GM12878 (cell line): ENCODE measurements at regions of chr16 and their contacts with region 1.

Region 1: GRCh38 chr16:71461686-71462648 is at the start of gene ZNF23:
- DNase-seq: peak; percentile 39
- ATAC-seq: peak; percentile 98
- H3K4me3 ChIP-seq: peak within 1 kb of the TSS; percentile 90
- H3K27ac ChIP-seq: peak within 1 kb of the TSS; percentile 74
- H3K4me1 ChIP-seq: no peaks in the 10 kb centered on the region
- H3K27me3 ChIP-seq: no peaks in the 10 kb centered on the region
- CTCF ChIP-seq: peak; percentile 9 to 23 (median 22); a peak in 3 of 6 replicates
- EP300 ChIP-seq: no peak
- POLR2A ChIP-seq: peak; percentile 99
- RAD21 ChIP-seq: no peak
- polyA plus RNA-seq, gene ZNF23: 3.6 to 4.8 TPM

Region 2: GRCh38 chr16:71484006-71484893 is 22.3 kb after region 1 on chr16:
- CTCF ChIA-PET with region 1: interaction called, 5 read pairs
- POLR2A ChIA-PET with region 1: interaction called, 10 read pairs
- RAD21 ChIA-PET with region 1: interaction called, 4 read pairs
- SMC1A ChIA-PET with region 1: interaction called, 21 read pairs
- in situ Hi-C with region 1: no loop called
- intact Hi-C with region 1: loop called (anchors 1 kb)
- DNase-seq: peak; percentile 82
- ATAC-seq: peak; percentile 94
- H3K4me3 ChIP-seq: peak overlapping the region; percentile 65
- H3K27ac ChIP-seq: peak overlapping the region; percentile 96
- H3K4me1 ChIP-seq: peaks cover 3% of the 10 kb centered on the region; the same call in 1 of the 2 replicates
- H3K27me3 ChIP-seq: no peaks in the 10 kb centered on the region
- CTCF ChIP-seq: no peak
- EP300 ChIP-seq: no peak
- POLR2A ChIP-seq: peak; percentile 86
- RAD21 ChIP-seq: no peak